ENCODE measurements at regions of chr12 and their contacts with region 1.

Region 1: DNA sequence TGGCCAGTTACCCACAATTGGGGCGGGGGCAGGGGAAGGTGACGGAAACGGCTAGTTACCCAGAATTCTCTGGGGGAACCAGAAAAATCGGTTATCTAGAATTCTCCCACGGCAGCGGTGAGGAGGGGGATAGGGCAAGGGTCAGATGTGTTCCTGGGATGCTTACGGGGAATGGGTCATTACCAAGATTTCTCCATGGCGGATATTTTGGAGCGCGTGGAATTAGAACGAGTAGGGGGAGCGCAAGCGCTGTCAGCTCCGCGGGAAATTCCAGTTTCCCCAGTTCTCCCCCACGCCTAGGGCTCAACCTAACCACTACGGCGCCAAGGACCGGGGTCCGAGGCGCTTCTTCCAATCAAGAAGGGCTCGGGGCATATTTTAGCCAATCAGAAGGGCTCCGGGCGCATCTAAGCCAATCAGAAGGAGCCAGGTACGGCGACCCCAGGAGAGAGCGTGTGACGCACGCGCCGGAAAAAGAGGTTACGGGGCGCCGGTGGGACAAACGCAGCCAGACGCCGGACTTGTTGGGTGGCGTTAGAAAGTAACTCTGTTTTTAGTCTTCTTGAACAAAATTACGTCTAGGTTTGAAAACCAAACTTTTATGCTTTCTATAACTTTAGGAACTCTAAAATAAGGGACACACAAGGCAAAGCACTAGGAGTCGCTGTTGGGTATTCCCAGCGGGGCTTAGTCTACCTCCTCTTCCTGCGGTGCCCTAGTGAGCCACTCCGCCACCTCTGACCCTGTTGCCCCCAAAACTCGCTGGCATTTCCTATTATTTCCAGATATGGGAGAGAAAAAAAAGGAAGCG is at the start of gene PAN2:
- DNase-seq: peak; percentile 99 to 100 (median 100)
- ATAC-seq: peak; percentile 94
- H3K4me3 ChIP-seq: peak within 1 kb of the TSS; percentile 64
- H3K27ac ChIP-seq: peak within 1 kb of the TSS; percentile 98
- H3K4me1 ChIP-seq: peaks cover 25 to 55% of the 10 kb centered on the region in 2 experiments
- H3K27me3 ChIP-seq: no peaks in the 10 kb centered on the region
- CTCF ChIP-seq: peak; percentile 47 to 70 (median 65)
- EP300 ChIP-seq: peak; percentile 3; the same call in 1 of the 2 replicates
- POLR2A ChIP-seq: peak; percentile 90
- RAD21 ChIP-seq: peak; percentile 18 to 31; a peak in 3 of 4 replicates
- polyA plus RNA-seq, gene PAN2: 15.0 to 23.9 TPM

Region 2: GRCh38 chr12:56315622-56316473 is 18.0 kb before region 1 on chr12 and contains the start of gene CNPY2:
- CTCF ChIA-PET with region 1: no interaction called
- POLR2A ChIA-PET with region 1: interaction called, 26 read pairs
- in situ Hi-C with region 1: no loop called
- intact Hi-C with region 1: loop called (anchors 2 kb)
- DNase-seq: peak; percentile 94 to 98 (median 95)
- ATAC-seq: peak; percentile 96
- H3K4me3 ChIP-seq: peak within 1 kb of the TSS; percentile 72
- H3K27ac ChIP-seq: peak within 1 kb of the TSS; percentile 77
- H3K4me1 ChIP-seq: peaks cover 11% of the 10 kb centered on the region in 2 experiments; a peak in 4 of 5 replicates
- H3K27me3 ChIP-seq: no peaks in the 10 kb centered on the region
- CTCF ChIP-seq: peak; percentile 69 to 76 (median 75)
- EP300 ChIP-seq: no peak
- POLR2A ChIP-seq: peak; percentile 88
- RAD21 ChIP-seq: peak; percentile 46 to 83
- polyA plus RNA-seq, gene CNPY2: 33.8 to 45.0 TPM

Region 3: GRCh38 chr12:56359851-56360767 is 26.2 kb after region 1 on chr12 and contains the start of gene STAT2:
- CTCF ChIA-PET with region 1: no interaction called
- POLR2A ChIA-PET with region 1: interaction called, 274 read pairs
- in situ Hi-C with region 1: no loop called
- intact Hi-C with region 1: loop called (anchors 1 kb)
- DNase-seq: peak; percentile 94 to 100 (median 96)
- ATAC-seq: peak; percentile 98
- H3K4me3 ChIP-seq: peak within 1 kb of the TSS; percentile 64
- H3K27ac ChIP-seq: peak within 1 kb of the TSS; percentile 76
- H3K4me1 ChIP-seq: peaks cover 13 to 15% of the 10 kb centered on the region in 2 experiments
- H3K27me3 ChIP-seq: no peaks in the 10 kb centered on the region
- CTCF ChIP-seq: peak in 1 of 3 experiments; percentile 19; a peak in 1 of 6 replicates
- EP300 ChIP-seq: peak; percentile 50
- POLR2A ChIP-seq: peak; percentile 82
- RAD21 ChIP-seq: peak in 1 of 2 experiments; percentile 19; a peak in 1 of 4 replicates
- polyA plus RNA-seq, gene STAT2: 15.5 to 16.9 TPM

Region 4: DNA sequence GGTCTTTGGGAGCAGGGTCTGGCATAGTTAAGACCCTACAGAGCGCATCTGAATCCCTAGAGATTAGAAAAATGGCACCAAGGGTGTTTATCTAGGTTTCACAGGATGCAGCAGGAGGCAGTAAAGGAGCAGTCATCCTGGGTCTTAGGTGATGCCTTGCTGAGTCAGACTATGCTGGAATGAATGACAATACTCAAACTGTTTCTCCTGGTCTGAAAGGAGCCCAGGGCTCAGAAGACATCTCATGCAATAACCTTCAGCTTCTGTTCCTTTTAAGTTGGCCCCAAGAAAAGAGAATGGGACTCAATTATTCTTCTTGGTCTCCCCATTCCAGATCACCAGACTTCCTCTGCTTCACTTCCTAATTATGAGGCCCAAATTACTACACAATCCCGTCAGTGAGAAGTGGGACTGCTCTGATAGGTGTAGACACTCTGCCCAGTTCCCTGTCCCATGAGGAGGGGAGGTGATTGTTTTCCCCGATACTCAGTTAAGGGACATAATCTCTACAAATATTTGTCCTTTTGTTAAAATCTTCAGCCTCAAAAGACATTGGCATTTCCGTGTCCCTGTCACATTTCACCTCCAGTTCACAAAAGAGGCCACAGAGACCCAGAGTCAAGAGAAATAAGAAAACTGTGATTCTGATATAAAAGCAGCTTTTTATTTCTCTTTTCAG is 43.6 kb after region 1 on chr12:
- CTCF ChIA-PET with region 1: no interaction called
- POLR2A ChIA-PET with region 1: no interaction called
- in situ Hi-C with region 1: no loop called
- intact Hi-C with region 1: no loop called
- DNase-seq: peak; percentile 57 to 89 (median 74)
- ATAC-seq: peak; percentile 95
- H3K4me3 ChIP-seq: no peak overlapping the region
- H3K27ac ChIP-seq: peak overlapping the region; percentile 83
- H3K4me1 ChIP-seq: peaks cover 22 to 24% of the 10 kb centered on the region in 2 experiments; a peak in 4 of 5 replicates
- H3K27me3 ChIP-seq: no peaks in the 10 kb centered on the region
- CTCF ChIP-seq: peak; percentile 71 to 79 (median 74)
- EP300 ChIP-seq: peak; percentile 60; the same call in 1 of the 2 replicates
- POLR2A ChIP-seq: no peak; the same call in 1 of the 2 replicates
- RAD21 ChIP-seq: peak; percentile 83 to 93